ENCODE measurements at regions of chr4 and their contacts with region 1.

Region 1: GRCh38 chr4:137576446-137576845 is 44.2 kb upstream of the PCDH18 start:
- DNase-seq: no peak
- ATAC-seq: no peak
- H3K4me3 ChIP-seq: no peak overlapping the region
- H3K27ac ChIP-seq: no peak overlapping the region
- H3K4me1 ChIP-seq: no peaks in the 10 kb centered on the region
- H3K27me3 ChIP-seq: no peaks in the 10 kb centered on the region
- CTCF ChIP-seq: no peak

Region 2: DNA sequence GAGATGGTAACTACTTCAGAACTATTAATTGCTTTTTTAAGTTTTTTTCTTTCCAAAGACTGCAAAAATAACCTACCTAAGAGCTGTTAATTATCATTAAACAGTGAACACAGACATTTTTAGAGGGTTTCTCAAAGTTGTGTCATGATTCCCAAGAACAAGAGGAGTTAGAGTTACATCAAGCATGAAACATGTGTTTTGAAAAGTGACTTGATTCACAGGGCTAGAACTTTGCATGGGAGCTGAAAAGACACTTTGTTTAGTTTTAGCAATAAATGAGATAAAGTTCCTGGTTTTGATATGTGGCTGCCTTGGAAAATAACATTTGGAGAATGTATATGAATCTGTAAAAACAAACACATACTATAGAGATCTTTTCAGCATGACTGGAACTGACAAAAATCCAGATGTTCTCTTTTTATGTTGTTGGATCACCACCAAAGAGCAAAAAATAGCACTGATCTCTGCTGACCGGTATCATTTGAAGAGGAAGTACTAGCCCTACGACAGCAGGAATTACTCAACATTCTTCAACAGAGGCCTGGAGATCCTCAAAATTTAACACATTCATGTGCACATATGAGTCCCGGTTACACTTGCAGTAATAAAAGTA is 128.8 kb after region 1 on chr4:
- intact Hi-C with region 1: no loop called
- DNase-seq: no peak
- ATAC-seq: peak in 3 of 4 donors; percentile 40 to 66 (median 60)
- H3K4me3 ChIP-seq: no peak overlapping the region
- H3K27ac ChIP-seq: no peak overlapping the region
- H3K4me1 ChIP-seq: no peaks in the 10 kb centered on the region
- H3K27me3 ChIP-seq: no peaks in the 10 kb centered on the region
- CTCF ChIP-seq: no peak

Region 3: GRCh38 chr4:138124472-138124871 is 548.0 kb after region 1 on chr4:
- intact Hi-C with region 1: loop called in 1 of 3 experiments (anchors 10 kb)
- DNase-seq: no peak
- ATAC-seq: no peak
- H3K4me3 ChIP-seq: no peak overlapping the region
- H3K27ac ChIP-seq: no peak overlapping the region
- H3K4me1 ChIP-seq: no peaks in the 10 kb centered on the region
- H3K27me3 ChIP-seq: no peaks in the 10 kb centered on the region
- CTCF ChIP-seq: no peak

Measured in pancreas (tissue), 10 donors.